HepG2 (cell line): ENCODE measurements at regions of chr6 and their contacts with region 1.

Region 1: DNA sequence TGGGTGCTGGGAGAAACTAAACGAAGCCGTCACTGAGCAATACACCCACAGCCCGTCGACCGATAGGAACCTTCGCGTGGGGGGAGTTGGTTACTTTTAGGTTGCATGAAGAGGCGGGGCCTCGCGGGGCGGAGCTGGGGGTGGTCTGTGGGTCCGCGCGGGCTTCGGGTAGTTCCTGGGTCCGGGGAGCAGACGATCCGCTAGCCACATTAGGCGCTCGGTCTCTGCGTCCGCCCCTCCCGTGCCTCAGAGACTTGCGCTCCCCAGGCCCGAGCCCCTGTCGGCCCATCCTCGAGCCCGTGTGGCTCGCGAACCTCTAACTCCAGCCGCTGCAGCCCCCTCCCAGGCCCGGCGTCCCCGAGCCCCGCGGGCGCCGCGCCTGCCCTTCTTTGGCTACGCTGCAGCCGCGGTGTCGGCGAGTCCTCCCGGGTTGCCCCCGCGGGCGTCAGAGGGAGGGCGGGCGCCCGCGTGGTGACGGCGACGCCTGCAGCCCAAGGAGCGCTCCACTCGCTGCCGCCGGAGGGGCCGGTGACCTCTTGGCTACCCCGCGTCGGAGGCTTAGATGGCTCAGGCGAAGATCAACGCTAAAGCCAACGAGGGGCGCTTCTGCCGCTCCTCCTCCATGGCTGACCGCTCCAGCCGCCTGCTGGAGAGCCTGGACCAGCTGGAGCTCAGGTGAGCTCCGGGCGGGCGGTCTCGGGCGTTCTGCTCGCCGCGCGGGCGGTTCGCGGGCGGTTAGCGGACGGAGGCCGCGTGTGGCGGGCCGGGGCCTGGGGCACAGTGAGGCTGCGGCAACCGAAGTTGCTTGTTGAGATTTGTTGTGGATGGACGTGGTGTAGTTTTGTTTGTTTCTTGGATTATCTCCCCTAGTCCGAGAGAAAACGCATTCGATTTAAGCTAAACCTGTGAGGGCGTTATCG is at the start of gene BAG2:
- DNase-seq: peak; percentile 88
- ATAC-seq: peak; percentile 94
- H3K4me3 ChIP-seq: peak within 1 kb of the TSS; percentile 69 to 90 (median 72)
- H3K27ac ChIP-seq: peak within 1 kb of the TSS; percentile 94
- H3K4me1 ChIP-seq: peaks cover 41% of the 10 kb centered on the region
- H3K27me3 ChIP-seq: no peaks in the 10 kb centered on the region; a peak in 1 of 5 replicates
- CTCF ChIP-seq: peak; percentile 59
- EP300 ChIP-seq: peak; percentile 6 to 53; a peak in 2 of 4 replicates
- POLR2A ChIP-seq: peak; percentile 93 to 98
- RAD21 ChIP-seq: peak; percentile 73; the same call in 1 of the 2 replicates
- total RNA-seq, gene BAG2: 15.1 and 23.0 TPM in 2 replicates

Region 2: DNA sequence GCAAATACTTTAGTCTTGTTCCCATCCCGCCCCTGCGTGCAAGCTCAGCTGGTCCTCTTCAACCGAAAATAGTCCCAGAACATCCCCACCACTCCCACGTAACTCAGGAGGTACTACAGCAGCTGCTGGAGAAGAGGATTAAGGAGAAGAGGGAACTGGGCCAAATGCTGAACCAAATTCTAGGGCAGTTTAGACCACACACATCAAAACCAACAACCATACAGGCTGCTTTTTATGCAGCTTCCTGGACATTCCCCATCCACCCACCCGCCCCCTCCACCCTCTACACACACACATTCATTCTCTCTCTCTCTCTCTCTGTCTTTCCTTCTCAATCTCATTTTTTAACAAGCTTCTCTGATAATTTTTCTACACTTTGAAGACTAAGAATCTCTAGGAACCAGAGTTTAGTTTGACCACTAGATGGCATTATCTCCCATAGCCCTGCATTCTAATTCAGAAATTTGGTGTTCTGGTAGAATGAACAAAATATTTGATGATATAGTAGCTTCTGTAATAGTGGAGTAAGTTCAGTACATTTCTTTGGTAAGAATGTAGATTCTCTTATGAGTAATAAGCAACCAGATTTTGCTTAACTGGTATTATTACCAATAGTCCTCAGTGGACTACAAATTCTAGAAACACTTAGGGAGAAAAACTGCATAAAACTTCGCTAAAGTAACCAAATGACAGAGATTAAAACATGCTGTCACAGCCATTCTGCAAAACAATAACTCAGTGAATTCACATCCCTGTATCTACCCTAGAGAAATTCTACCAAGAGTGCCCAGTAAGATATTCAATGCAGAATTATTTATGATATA is 269.5 kb before region 1 on chr6:
- CTCF ChIA-PET with region 1: no interaction called
- POLR2A ChIA-PET with region 1: no interaction called
- in situ Hi-C with region 1: no loop called
- intact Hi-C with region 1: loop called (anchors 5 kb)
- DNase-seq: peak; percentile 25
- ATAC-seq: peak; percentile 54
- H3K4me3 ChIP-seq: no peak overlapping the region
- H3K27ac ChIP-seq: no peak overlapping the region
- H3K4me1 ChIP-seq: peaks cover 11% of the 10 kb centered on the region; the same call in 1 of the 2 replicates
- H3K27me3 ChIP-seq: peaks cover 0 to 1% of the 10 kb centered on the region in 2 experiments; a peak in 1 of 5 replicates
- CTCF ChIP-seq: peak; percentile 67
- EP300 ChIP-seq: no peak
- POLR2A ChIP-seq: no peak
- RAD21 ChIP-seq: peak; percentile 28; the same call in 1 of the 2 replicates

Region 3: GRCh38 chr6:57048577-57048976 is 123.8 kb before region 1 on chr6:
- CTCF ChIA-PET with region 1: no interaction called
- POLR2A ChIA-PET with region 1: interaction called, 3 read pairs
- in situ Hi-C with region 1: no loop called
- intact Hi-C with region 1: loop called (anchors 1 kb)
- DNase-seq: no peak
- ATAC-seq: no peak
- H3K4me3 ChIP-seq: peak overlapping the region in 2 of 3 experiments; percentile 19 to 38; a peak in 3 of 6 replicates
- H3K27ac ChIP-seq: no peak overlapping the region
- H3K4me1 ChIP-seq: peaks cover 29% of the 10 kb centered on the region
- H3K27me3 ChIP-seq: no peaks in the 10 kb centered on the region
- CTCF ChIP-seq: no peak
- EP300 ChIP-seq: no peak
- POLR2A ChIP-seq: no peak
- RAD21 ChIP-seq: no peak

Region 4: GRCh38 chr6:57127763-57128162 is 44.6 kb before region 1 on chr6:
- CTCF ChIA-PET with region 1: no interaction called
- POLR2A ChIA-PET with region 1: interaction called, 4 read pairs
- in situ Hi-C with region 1: no loop called
- intact Hi-C with region 1: loop called (anchors 5 kb)
- DNase-seq: peak; percentile 20
- ATAC-seq: peak; percentile 92
- H3K4me3 ChIP-seq: no peak overlapping the region
- H3K27ac ChIP-seq: no peak overlapping the region
- H3K4me1 ChIP-seq: peaks cover 13% of the 10 kb centered on the region
- H3K27me3 ChIP-seq: no peaks in the 10 kb centered on the region
- CTCF ChIP-seq: no peak
- EP300 ChIP-seq: no peak
- POLR2A ChIP-seq: no peak
- RAD21 ChIP-seq: no peak

Region 5: GRCh38 chr6:57207141-57207540 is 34.7 kb after region 1 on chr6:
- CTCF ChIA-PET with region 1: no interaction called
- POLR2A ChIA-PET with region 1: no interaction called
- in situ Hi-C with region 1: no loop called
- intact Hi-C with region 1: no loop called
- DNase-seq: no peak
- ATAC-seq: no peak
- H3K4me3 ChIP-seq: no peak overlapping the region
- H3K27ac ChIP-seq: no peak overlapping the region
- H3K4me1 ChIP-seq: no peaks in the 10 kb centered on the region
- H3K27me3 ChIP-seq: no peaks in the 10 kb centered on the region
- CTCF ChIP-seq: no peak
- EP300 ChIP-seq: no peak
- POLR2A ChIP-seq: no peak
- RAD21 ChIP-seq: no peak

Region 6: DNA sequence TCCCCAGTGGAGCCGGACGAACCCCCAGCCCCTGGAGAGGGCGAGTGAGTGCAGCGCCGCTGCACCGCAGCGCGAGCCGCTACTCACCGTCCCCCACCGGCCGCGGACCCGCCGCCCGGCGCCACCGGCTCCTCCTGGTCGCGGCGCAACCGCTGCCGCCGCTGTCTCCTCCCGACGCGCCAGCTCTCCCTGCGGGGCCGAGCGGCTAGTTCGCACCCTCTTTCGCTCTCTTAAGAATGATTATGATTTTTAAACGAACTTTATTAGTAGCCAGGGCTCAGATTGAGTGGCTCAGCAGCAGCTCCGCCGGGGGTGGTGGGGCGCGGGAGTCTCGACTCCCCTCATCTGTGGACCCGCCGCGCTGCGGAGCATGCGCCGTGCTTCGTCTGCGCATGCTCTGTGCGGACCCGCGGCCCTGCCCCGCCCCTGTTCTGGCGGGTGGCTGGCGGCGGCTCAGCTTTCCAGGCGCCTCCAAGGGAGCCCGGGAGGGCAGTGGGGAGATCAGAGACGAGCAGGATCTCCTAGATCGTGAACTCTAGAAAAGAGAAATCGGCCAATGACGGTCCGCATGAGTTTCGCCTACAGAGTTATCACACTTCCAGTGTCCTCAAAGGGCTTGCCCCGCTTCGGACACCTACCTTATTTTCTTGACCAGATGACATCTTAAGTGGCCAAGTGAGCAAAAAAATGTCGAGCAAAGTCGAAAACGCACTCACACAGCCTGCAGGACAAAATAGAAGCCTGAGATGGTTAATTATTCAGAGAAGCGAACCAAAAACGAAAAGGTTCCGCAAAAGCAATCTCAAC is 49.7 kb after region 1 on chr6 and contains the start of gene RAB23:
- CTCF ChIA-PET with region 1: no interaction called
- POLR2A ChIA-PET with region 1: interaction called, 13 read pairs
- in situ Hi-C with region 1: no loop called
- intact Hi-C with region 1: loop called (anchors 5 kb)
- DNase-seq: peak; percentile 75
- ATAC-seq: peak; percentile 92
- H3K4me3 ChIP-seq: peak within 1 kb of the TSS; percentile 88 to 95 (median 93)
- H3K27ac ChIP-seq: peak within 1 kb of the TSS; percentile 77
- H3K4me1 ChIP-seq: peaks cover 31% of the 10 kb centered on the region
- H3K27me3 ChIP-seq: no peaks in the 10 kb centered on the region; a peak in 1 of 5 replicates
- CTCF ChIP-seq: no peak
- EP300 ChIP-seq: no peak
- POLR2A ChIP-seq: peak; percentile 65 to 94
- RAD21 ChIP-seq: no peak
- total RNA-seq, gene RAB23: 16.4 and 24.2 TPM in 2 replicates